ENCODE measurements at regions of chr10 and their contacts with region 1.

Region 1: GRCh38 chr10:14385596-14386593 is 55.2 kb upstream of the FRMD4A start:
- DNase-seq: peak; percentile 67
- H3K4me3 Mint-ChIP-seq: no peak overlapping the region
- H3K27ac Mint-ChIP-seq: no peak overlapping the region
- H3K4me1 Mint-ChIP-seq: peaks cover 80% of the 10 kb centered on the region
- H3K27me3 Mint-ChIP-seq: peaks cover 3% of the 10 kb centered on the region

Region 2: GRCh38 chr10:14374745-14375445 is 11.0 kb before region 1 on chr10:
- CTCF ChIA-PET with region 1: no interaction called
- intact Hi-C with region 1: loop called (anchors 2 kb)
- DNase-seq: peak; percentile 48
- H3K4me3 Mint-ChIP-seq: no peak overlapping the region
- H3K27ac Mint-ChIP-seq: no peak overlapping the region
- H3K4me1 Mint-ChIP-seq: peaks cover 19% of the 10 kb centered on the region
- H3K27me3 Mint-ChIP-seq: peaks cover 4% of the 10 kb centered on the region

Region 3: GRCh38 chr10:14527134-14527844 is 141.4 kb after region 1 on chr10:
- CTCF ChIA-PET with region 1: no interaction called
- intact Hi-C with region 1: loop called (anchors 1 kb)
- DNase-seq: no peak
- H3K4me3 Mint-ChIP-seq: no peak overlapping the region
- H3K27ac Mint-ChIP-seq: peak overlapping the region; percentile 81
- H3K4me1 Mint-ChIP-seq: peaks cover 78% of the 10 kb centered on the region
- H3K27me3 Mint-ChIP-seq: no peaks in the 10 kb centered on the region

Region 4: GRCh38 chr10:14837757-14838581 is 452.1 kb after region 1 on chr10 and contains the starts of genes CDNF, HSPA14 and MSANTD7:
- CTCF ChIA-PET with region 1: no interaction called
- intact Hi-C with region 1: loop called (anchors 5 kb)
- DNase-seq: peak; percentile 99
- H3K4me3 Mint-ChIP-seq: peak within 1 kb of the TSS; percentile 92
- H3K27ac Mint-ChIP-seq: peak within 1 kb of the TSS; percentile 93
- H3K4me1 Mint-ChIP-seq: peaks cover 22% of the 10 kb centered on the region
- H3K27me3 Mint-ChIP-seq: no peaks in the 10 kb centered on the region
- total RNA-seq, gene CDNF: 1.6 to 1.8 TPM
- total RNA-seq, gene HSPA14: 28.1 to 29.9 TPM
- total RNA-seq, gene MSANTD7: 19.6 to 21.3 TPM

Region 5: DNA sequence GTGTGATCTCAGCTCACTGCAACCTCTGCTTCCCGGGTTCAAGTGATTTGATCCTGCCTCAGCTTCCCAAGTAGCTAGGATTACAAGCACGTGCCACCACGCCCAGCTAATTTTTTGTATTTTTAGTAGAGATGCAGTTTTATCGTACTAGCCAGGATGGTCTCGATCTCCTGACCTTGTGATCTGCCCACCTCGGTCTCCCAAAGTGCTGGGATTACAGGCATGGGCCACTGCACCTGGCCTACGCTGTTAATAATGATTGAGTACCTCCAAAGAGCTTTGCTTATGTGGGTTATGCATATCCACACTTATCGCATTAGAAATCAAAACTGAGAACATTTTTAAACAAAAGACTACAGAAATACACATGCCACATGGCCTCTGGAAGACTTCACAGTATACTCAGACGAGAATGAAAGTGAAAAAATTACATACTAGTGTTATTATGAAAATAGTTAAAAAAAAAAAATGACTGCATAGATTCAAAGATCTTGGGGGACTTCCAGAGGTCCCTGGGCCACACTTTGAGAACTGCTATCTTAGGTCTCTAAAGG is 736.7 kb after region 1 on chr10:
- CTCF ChIA-PET with region 1: no interaction called
- intact Hi-C with region 1: loop called (anchors 1 kb)
- DNase-seq: peak; percentile 59
- H3K4me3 Mint-ChIP-seq: no peak overlapping the region
- H3K27ac Mint-ChIP-seq: peak overlapping the region; percentile 86
- H3K4me1 Mint-ChIP-seq: peaks cover 32% of the 10 kb centered on the region
- H3K27me3 Mint-ChIP-seq: no peaks in the 10 kb centered on the region

Measured in activated naive CD4-positive, alpha-beta T cell treated with anti-CD3 and anti-CD28 coated beads for 36 hours (primary cell).